ENCODE measurements at regions of chr7 and their contacts with region 1.

Region 1: DNA sequence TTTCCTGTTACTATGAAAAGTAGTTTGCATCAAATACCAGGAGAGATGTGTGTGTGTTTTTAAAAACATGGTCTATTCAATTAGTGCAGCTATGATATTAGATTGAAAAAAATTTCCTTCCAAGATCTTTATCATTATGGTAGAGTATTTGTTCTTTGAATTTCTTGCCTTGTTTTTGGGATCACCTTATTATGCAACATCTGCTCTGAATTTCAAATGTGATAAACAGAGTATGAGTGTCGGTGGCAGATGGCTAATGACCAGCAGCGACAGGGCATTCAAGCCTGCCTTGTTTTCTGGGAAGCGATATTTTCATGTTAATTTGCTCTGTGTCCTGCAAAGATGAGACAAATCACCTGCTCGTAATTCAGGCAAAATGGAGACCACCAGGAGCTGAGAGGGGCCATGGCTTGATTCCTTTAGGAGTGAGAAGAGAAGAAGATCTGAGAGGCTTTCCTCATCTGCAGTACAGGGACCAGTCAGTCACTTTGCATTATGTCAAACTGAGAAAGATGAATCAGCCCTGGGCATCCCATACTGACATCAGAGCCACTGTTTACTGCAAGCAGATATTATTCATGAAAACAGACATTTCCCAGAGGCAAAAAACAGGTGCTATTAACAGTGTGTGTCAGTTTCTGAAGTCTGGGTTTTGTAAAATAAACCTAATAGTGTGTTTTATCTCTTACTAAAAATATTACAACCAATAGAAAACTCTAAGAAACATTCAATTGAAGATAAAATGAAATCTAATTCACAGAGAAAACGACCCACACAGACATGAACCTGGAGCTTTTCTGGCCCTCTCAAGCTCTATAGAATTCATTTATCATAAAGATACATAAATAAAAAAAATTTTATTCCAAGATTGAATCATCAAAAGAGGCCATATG is 67.6 kb downstream of the CDK6 start:
- DNase-seq: no peak
- H3K4me3 ChIP-seq: no peak overlapping the region
- H3K27ac ChIP-seq: no peak overlapping the region
- H3K4me1 ChIP-seq: peaks cover 0 to 57% (median 9%) of the 10 kb centered on the region in 4 donors
- H3K27me3 ChIP-seq: no peaks in the 10 kb centered on the region
- CTCF ChIP-seq: no peak

Region 2: DNA sequence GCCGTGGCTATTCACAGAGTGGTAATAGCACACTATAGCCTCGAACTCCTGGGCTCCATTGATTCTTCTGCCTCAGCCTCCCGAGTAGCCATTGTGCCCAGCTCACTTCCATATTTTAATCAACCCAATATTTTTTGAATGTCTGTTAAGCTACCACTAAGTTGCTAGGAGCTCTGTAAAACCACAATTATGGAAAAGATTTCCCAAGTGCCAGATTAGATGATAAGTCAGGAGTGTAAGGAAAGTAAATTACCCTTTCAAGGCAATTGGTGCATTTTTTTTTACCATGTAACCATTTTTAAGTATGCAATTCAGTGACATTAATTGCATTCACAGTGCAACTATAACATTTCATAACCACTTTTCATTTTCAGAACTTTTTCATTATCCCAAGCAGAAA is 408.9 kb before region 1 on chr7:
- intact Hi-C with region 1: no loop called
- DNase-seq: no peak
- H3K4me3 ChIP-seq: no peak overlapping the region
- H3K27ac ChIP-seq: no peak overlapping the region
- H3K4me1 ChIP-seq: no peaks in the 10 kb centered on the region
- H3K27me3 ChIP-seq: no peaks in the 10 kb centered on the region
- CTCF ChIP-seq: no peak

Region 3: GRCh38 chr7:92717993-92718716 is 50.6 kb before region 1 on chr7:
- intact Hi-C with region 1: loop called (anchors 10 kb)
- DNase-seq: peak; percentile 47 to 72
- H3K4me3 ChIP-seq: peak overlapping the region; percentile 57 to 58
- H3K27ac ChIP-seq: peak overlapping the region; percentile 78 to 89
- H3K4me1 ChIP-seq: peaks cover 0 to 73% (median 18%) of the 10 kb centered on the region in 4 donors
- H3K27me3 ChIP-seq: no peaks in the 10 kb centered on the region
- CTCF ChIP-seq: no peak

Region 4: GRCh38 chr7:92815412-92815811 is 46.7 kb after region 1 on chr7:
- intact Hi-C with region 1: loop called (anchors 5 kb)
- DNase-seq: no peak
- H3K4me3 ChIP-seq: no peak overlapping the region
- H3K27ac ChIP-seq: no peak overlapping the region
- H3K4me1 ChIP-seq: peaks cover 0 to 6% (median 1%) of the 10 kb centered on the region in 4 donors
- H3K27me3 ChIP-seq: no peaks in the 10 kb centered on the region
- CTCF ChIP-seq: no peak

Region 5: DNA sequence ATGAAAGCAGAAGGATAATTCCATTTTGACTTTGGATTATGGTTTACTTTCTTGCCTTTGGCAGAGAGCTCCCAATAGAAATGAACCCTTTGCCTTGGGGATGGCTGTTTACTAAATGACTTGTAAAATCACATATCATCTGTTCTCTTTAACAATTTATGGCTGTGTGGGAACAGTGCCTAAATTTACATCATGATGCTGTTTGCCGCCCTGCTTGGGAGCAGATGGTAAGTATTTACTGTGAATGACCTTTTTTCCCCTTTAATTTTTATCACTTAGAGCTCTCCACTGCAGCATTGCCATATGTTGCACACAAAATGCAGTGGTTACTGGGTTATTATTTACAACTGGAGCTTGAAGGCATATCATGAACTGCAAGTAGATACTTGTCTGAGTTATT is 444.1 kb after region 1 on chr7:
- intact Hi-C with region 1: no loop called
- DNase-seq: no peak
- H3K4me3 ChIP-seq: no peak overlapping the region
- H3K27ac ChIP-seq: no peak overlapping the region
- H3K4me1 ChIP-seq: no peaks in the 10 kb centered on the region
- H3K27me3 ChIP-seq: no peaks in the 10 kb centered on the region
- CTCF ChIP-seq: no peak

Measured in tibial artery (tissue), 4 donors.